ENCODE measurements at regions of chr1 and their contacts with region 1.

Region 1: GRCh38 chr1:57254022-57254421 is 169.8 kb downstream of the DAB1 start:
- DNase-seq: no peak
- H3K4me3 ChIP-seq: no peak overlapping the region
- H3K27ac ChIP-seq: no peak overlapping the region
- H3K4me1 ChIP-seq: no peaks in the 10 kb centered on the region
- H3K27me3 ChIP-seq: no peaks in the 10 kb centered on the region
- CTCF ChIP-seq: no peak

Region 2: GRCh38 chr1:57232500-57232899 is 21.5 kb before region 1 on chr1:
- intact Hi-C with region 1: no loop called
- DNase-seq: no peak
- H3K4me3 ChIP-seq: no peak overlapping the region
- H3K27ac ChIP-seq: no peak overlapping the region
- H3K4me1 ChIP-seq: no peaks in the 10 kb centered on the region
- H3K27me3 ChIP-seq: no peaks in the 10 kb centered on the region
- CTCF ChIP-seq: no peak

Region 3: DNA sequence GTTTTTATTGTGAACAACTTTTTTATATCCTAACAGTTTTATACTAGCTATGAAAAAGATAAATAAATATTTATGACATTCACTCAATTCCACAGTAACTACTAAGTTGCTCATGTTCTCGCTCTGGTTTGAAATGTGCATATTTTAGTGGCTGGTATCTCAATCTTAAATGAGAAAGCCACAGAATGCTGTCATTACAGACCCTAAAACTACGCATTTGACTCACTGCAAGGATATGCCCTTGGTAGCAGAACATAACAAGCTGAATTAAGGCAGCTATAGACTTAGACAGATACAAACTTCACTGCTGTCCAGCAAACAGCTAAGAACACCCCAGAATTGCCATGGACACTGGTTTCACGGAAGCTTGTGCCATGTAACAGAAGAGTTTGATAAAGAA is 150.9 kb after region 1 on chr1:
- intact Hi-C with region 1: loop called (anchors 10 kb)
- DNase-seq: no peak
- H3K4me3 ChIP-seq: no peak overlapping the region
- H3K27ac ChIP-seq: no peak overlapping the region
- H3K4me1 ChIP-seq: no peaks in the 10 kb centered on the region
- H3K27me3 ChIP-seq: no peaks in the 10 kb centered on the region
- CTCF ChIP-seq: no peak